CD8-positive, alpha-beta T cell (primary cell): ENCODE measurements at regions of chr22 and their contacts with region 1.

Region 1: DNA sequence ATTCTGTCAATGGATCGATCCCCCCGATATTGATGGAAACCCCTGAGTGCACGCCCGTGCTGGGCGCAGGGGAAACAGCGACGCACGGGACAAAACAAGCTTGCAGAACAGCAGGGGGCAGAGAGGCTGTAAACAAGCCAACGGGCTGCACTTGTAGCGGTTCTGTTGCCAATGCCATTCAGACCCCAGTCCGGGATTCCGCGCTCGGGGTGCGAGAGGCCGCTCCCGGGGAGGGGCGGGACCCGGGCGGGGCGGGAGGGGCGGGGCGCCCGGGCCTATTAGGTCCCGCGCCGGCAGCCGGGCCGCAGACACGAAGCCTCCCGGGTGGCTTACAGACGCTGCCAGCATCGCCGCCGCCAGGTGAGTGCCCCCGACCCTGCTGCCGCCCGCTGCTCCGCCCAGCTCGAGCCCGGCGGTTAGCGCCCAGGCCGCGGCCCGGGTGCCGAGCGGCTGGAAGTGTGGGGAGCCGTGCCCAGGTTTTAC is at the start of gene BIK:
- DNase-seq: peak in 8 of 9 experiments; percentile 31 to 69 (median 52)
- ATAC-seq: peak; percentile 49
- H3K4me3 ChIP-seq: peak within 1 kb of the TSS; percentile 51 to 82
- H3K4me3 Mint-ChIP-seq: peak within 1 kb of the TSS; percentile 87
- H3K27ac ChIP-seq: peak within 1 kb of the TSS in 1 of 2 experiments; percentile 20
- H3K27ac Mint-ChIP-seq: no peak within 1 kb of the TSS
- H3K4me1 ChIP-seq: peaks cover 7% of the 10 kb centered on the region
- H3K4me1 Mint-ChIP-seq: peaks cover 10% of the 10 kb centered on the region
- H3K27me3 ChIP-seq: no peaks in the 10 kb centered on the region
- H3K27me3 Mint-ChIP-seq: no peaks in the 10 kb centered on the region
- CTCF ChIP-seq: peak; percentile 12
- total RNA-seq, gene BIK: 5.3 to 6.1 TPM

Region 2: DNA sequence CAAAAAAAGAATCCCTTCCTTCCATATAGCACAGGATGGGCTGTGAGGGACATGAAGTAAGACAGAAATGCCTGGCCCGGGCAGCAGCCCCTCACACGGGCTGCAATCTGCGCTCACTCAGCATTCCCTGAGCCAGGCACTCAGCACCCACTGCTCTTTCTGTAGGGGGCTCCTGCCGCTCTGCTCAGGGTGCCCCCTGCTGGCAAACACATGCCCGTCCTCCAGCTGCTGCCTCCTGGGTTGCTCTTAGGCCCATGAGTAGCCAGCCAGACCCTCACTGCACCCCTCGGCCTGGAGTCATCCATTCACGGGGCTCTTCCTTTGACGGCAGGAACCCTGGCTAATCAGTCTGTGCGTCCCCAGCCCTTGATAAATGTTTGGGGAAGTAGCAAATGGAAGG is 25.8 kb after region 1 on chr22:
- CTCF ChIA-PET with region 1: interaction called, 6 read pairs
- POLR2A ChIA-PET with region 1: interaction called, 4 read pairs
- intact Hi-C with region 1: loop called in 1 of 2 experiments (anchors 2 kb)
- DNase-seq: peak in 8 of 9 experiments; percentile 23 to 67 (median 56)
- ATAC-seq: peak; percentile 75
- H3K4me3 ChIP-seq: no peak overlapping the region
- H3K4me3 Mint-ChIP-seq: no peak overlapping the region
- H3K27ac ChIP-seq: no peak overlapping the region
- H3K27ac Mint-ChIP-seq: peak overlapping the region; percentile 66
- H3K4me1 ChIP-seq: no peaks in the 10 kb centered on the region
- H3K4me1 Mint-ChIP-seq: peaks cover 5% of the 10 kb centered on the region
- H3K27me3 ChIP-seq: no peaks in the 10 kb centered on the region
- H3K27me3 Mint-ChIP-seq: no peaks in the 10 kb centered on the region
- CTCF ChIP-seq: peak; percentile 57

Region 3: GRCh38 chr22:43151251-43152002 is 40.9 kb after region 1 on chr22 and contains the start of gene TSPO:
- CTCF ChIA-PET with region 1: no interaction called
- POLR2A ChIA-PET with region 1: no interaction called
- intact Hi-C with region 1: loop called in 1 of 2 experiments (anchors 1 kb)
- DNase-seq: peak; percentile 29 to 77 (median 57)
- ATAC-seq: peak; percentile 60
- H3K4me3 ChIP-seq: peak within 1 kb of the TSS; percentile 73 to 84
- H3K4me3 Mint-ChIP-seq: peak within 1 kb of the TSS; percentile 91
- H3K27ac ChIP-seq: peak within 1 kb of the TSS; percentile 56 to 62
- H3K27ac Mint-ChIP-seq: peak within 1 kb of the TSS; percentile 90
- H3K4me1 ChIP-seq: peaks cover 12% of the 10 kb centered on the region
- H3K4me1 Mint-ChIP-seq: peaks cover 25% of the 10 kb centered on the region
- H3K27me3 ChIP-seq: no peaks in the 10 kb centered on the region
- H3K27me3 Mint-ChIP-seq: no peaks in the 10 kb centered on the region
- CTCF ChIP-seq: no peak
- total RNA-seq, gene TSPO: 22.5 to 24.7 TPM

Region 4: DNA sequence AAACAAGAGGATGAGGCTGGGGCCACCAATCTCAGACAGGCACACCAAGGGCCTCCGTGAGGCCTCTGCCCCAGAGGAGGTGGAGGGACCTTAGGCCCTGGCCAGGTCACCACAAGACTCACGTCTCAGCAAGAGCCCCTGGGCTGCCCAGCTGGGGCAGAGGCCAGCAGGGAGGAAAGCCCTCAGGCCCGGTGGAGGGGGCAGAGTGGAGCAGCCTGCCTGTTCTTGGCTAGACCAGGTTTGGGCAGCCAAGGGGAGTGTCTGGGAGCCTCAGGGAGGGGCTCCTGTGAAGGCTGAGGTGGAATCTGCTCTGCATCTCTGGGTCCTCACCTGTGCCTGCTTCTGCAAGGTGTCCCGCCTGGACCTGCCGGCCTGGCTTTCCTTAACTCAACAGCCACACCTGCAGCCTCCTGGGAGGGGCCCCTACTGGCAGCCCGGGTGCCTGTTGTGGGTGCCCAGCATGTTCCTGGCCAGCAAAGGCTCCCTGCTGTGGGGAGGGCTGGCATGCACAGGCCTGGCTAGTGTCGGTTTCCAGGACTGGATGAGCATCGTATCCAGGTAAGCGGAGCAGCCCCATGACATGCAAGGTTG is 64.6 kb after region 1 on chr22:
- CTCF ChIA-PET with region 1: no interaction called
- POLR2A ChIA-PET with region 1: no interaction called
- intact Hi-C with region 1: no loop called
- DNase-seq: no peak
- ATAC-seq: no peak
- H3K4me3 ChIP-seq: no peak overlapping the region
- H3K4me3 Mint-ChIP-seq: no peak overlapping the region
- H3K27ac ChIP-seq: no peak overlapping the region
- H3K27ac Mint-ChIP-seq: no peak overlapping the region
- H3K4me1 ChIP-seq: no peaks in the 10 kb centered on the region
- H3K4me1 Mint-ChIP-seq: no peaks in the 10 kb centered on the region
- H3K27me3 ChIP-seq: no peaks in the 10 kb centered on the region
- H3K27me3 Mint-ChIP-seq: no peaks in the 10 kb centered on the region
- CTCF ChIP-seq: no peak

Region 5: GRCh38 chr22:43244402-43244801 is 133.9 kb after region 1 on chr22:
- CTCF ChIA-PET with region 1: no interaction called
- POLR2A ChIA-PET with region 1: no interaction called
- intact Hi-C with region 1: no loop called
- DNase-seq: no peak
- ATAC-seq: no peak
- H3K4me3 ChIP-seq: no peak overlapping the region
- H3K4me3 Mint-ChIP-seq: no peak overlapping the region
- H3K27ac ChIP-seq: no peak overlapping the region
- H3K27ac Mint-ChIP-seq: no peak overlapping the region
- H3K4me1 ChIP-seq: no peaks in the 10 kb centered on the region
- H3K4me1 Mint-ChIP-seq: no peaks in the 10 kb centered on the region
- H3K27me3 ChIP-seq: no peaks in the 10 kb centered on the region
- H3K27me3 Mint-ChIP-seq: no peaks in the 10 kb centered on the region
- CTCF ChIP-seq: no peak